B cell (primary cell): ENCODE measurements at regions of chr10 and their contacts with region 1.

Region 1: GRCh38 chr10:60733189-60733822 is 45.0 kb upstream of the CDK1 start:
- DNase-seq: peak; percentile 70
- ATAC-seq: peak; percentile 83
- H3K4me3 ChIP-seq: peak overlapping the region in 4 of 5 experiments; percentile 57 to 83 (median 71)
- H3K4me3 Mint-ChIP-seq: peak overlapping the region; percentile 76
- H3K27ac ChIP-seq: peak overlapping the region in 1 of 2 donors; percentile 71
- H3K27ac Mint-ChIP-seq: peak overlapping the region; percentile 72
- H3K4me1 ChIP-seq: peaks cover 21% of the 10 kb centered on the region in 2 donors
- H3K4me1 Mint-ChIP-seq: peaks cover 30% of the 10 kb centered on the region
- H3K27me3 ChIP-seq: peaks cover 0 to 21% (median 9%) of the 10 kb centered on the region in 4 experiments
- H3K27me3 Mint-ChIP-seq: no peaks in the 10 kb centered on the region
- CTCF ChIP-seq: peak; percentile 68

Region 2: GRCh38 chr10:60652628-60653027 is 80.7 kb before region 1 on chr10:
- CTCF ChIA-PET with region 1: interaction called, 3 read pairs
- POLR2A ChIA-PET with region 1: no interaction called
- intact Hi-C with region 1: loop called (anchors 5 kb)
- DNase-seq: peak; percentile 49
- ATAC-seq: peak; percentile 96
- H3K4me3 ChIP-seq: no peak overlapping the region
- H3K4me3 Mint-ChIP-seq: peak overlapping the region; percentile 5
- H3K27ac ChIP-seq: peak overlapping the region; percentile 7 to 24
- H3K27ac Mint-ChIP-seq: peak overlapping the region; percentile 74
- H3K4me1 ChIP-seq: peaks cover 6 to 13% of the 10 kb centered on the region in 2 donors
- H3K4me1 Mint-ChIP-seq: peaks cover 16% of the 10 kb centered on the region
- H3K27me3 ChIP-seq: no peaks in the 10 kb centered on the region
- H3K27me3 Mint-ChIP-seq: no peaks in the 10 kb centered on the region
- CTCF ChIP-seq: no peak

Region 3: DNA sequence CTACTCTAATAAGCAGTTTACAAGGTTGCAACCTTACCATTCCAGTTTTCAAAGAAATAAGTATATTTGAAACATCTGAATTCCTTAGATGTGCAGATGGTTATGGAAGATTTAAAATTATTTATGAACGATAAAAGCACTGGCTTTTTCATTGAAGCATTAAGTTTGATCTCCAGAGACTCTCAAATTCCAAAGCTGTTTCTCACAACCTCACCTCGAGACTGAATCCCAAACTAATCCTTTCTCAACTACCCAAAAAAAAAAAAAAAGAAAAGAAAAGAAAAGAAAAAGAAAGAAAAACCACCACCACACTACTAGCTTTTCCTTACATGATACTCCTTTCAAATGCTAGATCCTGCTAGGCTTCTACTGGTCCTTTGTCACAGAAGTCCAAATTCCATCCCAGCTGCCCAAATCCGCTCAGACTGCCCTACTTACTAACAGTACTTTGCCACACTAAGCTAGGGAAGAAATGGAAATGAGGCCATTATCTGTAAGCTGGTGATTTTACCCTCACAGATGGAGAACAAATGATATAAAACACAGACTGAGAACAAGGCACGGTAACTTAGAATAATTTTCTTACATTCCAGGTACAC is 55.7 kb before region 1 on chr10:
- CTCF ChIA-PET with region 1: no interaction called
- POLR2A ChIA-PET with region 1: no interaction called
- intact Hi-C with region 1: no loop called
- DNase-seq: no peak
- ATAC-seq: no peak
- H3K4me3 ChIP-seq: no peak overlapping the region
- H3K4me3 Mint-ChIP-seq: no peak overlapping the region
- H3K27ac ChIP-seq: no peak overlapping the region
- H3K27ac Mint-ChIP-seq: no peak overlapping the region
- H3K4me1 ChIP-seq: no peaks in the 10 kb centered on the region
- H3K4me1 Mint-ChIP-seq: no peaks in the 10 kb centered on the region
- H3K27me3 ChIP-seq: no peaks in the 10 kb centered on the region
- H3K27me3 Mint-ChIP-seq: no peaks in the 10 kb centered on the region
- CTCF ChIP-seq: no peak

Region 4: DNA sequence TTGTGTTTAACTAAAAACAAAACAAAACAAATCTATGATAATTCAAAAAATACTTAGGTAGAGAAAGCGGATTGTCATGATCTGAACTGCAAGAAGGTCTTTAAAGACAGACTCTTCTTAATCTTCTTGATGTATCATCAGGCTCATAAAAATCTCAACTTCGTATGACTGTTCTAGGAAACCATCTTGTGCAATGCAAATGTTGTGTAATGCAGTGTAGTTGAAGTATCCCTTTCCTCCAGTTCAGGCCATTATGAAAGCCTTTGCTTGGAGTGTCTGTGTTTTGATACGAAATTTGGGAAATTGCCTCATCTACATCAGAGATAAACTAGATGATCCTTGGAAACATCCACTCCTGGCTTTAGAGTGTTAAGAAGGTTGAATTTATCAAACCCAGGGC is 75.9 kb after region 1 on chr10:
- CTCF ChIA-PET with region 1: no interaction called
- POLR2A ChIA-PET with region 1: no interaction called
- intact Hi-C with region 1: no loop called
- DNase-seq: no peak
- ATAC-seq: no peak
- H3K4me3 ChIP-seq: no peak overlapping the region
- H3K4me3 Mint-ChIP-seq: no peak overlapping the region
- H3K27ac ChIP-seq: no peak overlapping the region
- H3K27ac Mint-ChIP-seq: no peak overlapping the region
- H3K4me1 ChIP-seq: no peaks in the 10 kb centered on the region
- H3K4me1 Mint-ChIP-seq: no peaks in the 10 kb centered on the region
- H3K27me3 ChIP-seq: no peaks in the 10 kb centered on the region
- H3K27me3 Mint-ChIP-seq: no peaks in the 10 kb centered on the region
- CTCF ChIP-seq: no peak